Left cardiac atrium (tissue), 4 donors: ENCODE measurements at regions of chr14 and their contacts with region 1.

Region 1: GRCh38 chr14:35404449-35405303 is at the start of gene NFKBIA:
- DNase-seq: peak; percentile 94
- ATAC-seq: peak; percentile 70 to 86
- total RNA-seq, gene NFKBIA: 99.0 to 103 TPM

Region 2: GRCh38 chr14:35046048-35046741 is 358.5 kb before region 1 on chr14 and contains the start of gene FAM177A1:
- intact Hi-C with region 1: loop called in 1 of 2 experiments (anchors 5 kb)
- DNase-seq: peak; percentile 99
- ATAC-seq: peak; percentile 98 to 99
- total RNA-seq, gene FAM177A1: 40.4 to 88.2 TPM

Region 3: GRCh38 chr14:35215110-35215876 is 189.4 kb before region 1 on chr14:
- intact Hi-C with region 1: loop called in 1 of 2 experiments (anchors 2 kb)
- DNase-seq: no peak
- ATAC-seq: peak; percentile 41 to 75

Region 4: DNA sequence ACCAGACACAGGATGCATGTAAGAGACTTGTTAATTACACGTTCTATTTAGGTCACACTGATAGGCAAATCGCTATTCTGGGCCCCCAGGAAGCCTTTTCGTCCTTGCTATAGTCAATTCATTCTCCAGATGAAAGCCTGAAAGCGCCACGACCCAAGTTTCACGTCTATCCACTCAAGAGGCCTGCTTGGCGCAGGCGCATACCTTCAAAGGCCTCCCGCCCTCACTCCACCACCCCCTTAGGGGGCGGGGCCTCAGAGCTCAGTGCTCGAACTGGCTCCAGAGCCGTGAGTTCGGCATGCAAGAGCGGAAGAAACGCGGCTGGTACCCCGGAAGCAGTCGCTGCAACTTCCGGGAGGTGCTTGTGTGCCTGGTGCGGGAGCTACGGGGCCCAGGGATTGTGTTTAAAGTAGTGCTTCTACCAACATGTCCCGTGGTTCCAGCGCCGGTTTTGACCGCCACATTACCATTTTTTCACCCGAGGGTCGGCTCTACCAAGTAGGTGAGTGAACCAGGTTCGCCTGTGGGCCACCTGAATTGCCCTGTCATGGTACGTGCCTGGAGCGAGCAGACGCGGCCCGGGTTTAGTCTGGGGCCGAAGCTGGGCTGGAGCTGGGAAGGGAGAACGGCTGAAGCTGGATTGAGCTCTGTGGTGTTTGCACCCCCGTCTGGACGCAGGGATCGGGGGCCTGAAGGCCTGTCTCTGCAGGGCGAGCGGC is 112.5 kb before region 1 on chr14 and contains the start of gene PSMA6:
- intact Hi-C with region 1: loop called (anchors 1 to 5 kb)
- DNase-seq: peak; percentile 99
- ATAC-seq: peak; percentile 100
- total RNA-seq, gene PSMA6: 131 to 165 TPM

Region 5: GRCh38 chr14:35304812-35305462 is 99.7 kb before region 1 on chr14:
- intact Hi-C with region 1: no loop called
- DNase-seq: no peak
- ATAC-seq: no peak

Region 6: DNA sequence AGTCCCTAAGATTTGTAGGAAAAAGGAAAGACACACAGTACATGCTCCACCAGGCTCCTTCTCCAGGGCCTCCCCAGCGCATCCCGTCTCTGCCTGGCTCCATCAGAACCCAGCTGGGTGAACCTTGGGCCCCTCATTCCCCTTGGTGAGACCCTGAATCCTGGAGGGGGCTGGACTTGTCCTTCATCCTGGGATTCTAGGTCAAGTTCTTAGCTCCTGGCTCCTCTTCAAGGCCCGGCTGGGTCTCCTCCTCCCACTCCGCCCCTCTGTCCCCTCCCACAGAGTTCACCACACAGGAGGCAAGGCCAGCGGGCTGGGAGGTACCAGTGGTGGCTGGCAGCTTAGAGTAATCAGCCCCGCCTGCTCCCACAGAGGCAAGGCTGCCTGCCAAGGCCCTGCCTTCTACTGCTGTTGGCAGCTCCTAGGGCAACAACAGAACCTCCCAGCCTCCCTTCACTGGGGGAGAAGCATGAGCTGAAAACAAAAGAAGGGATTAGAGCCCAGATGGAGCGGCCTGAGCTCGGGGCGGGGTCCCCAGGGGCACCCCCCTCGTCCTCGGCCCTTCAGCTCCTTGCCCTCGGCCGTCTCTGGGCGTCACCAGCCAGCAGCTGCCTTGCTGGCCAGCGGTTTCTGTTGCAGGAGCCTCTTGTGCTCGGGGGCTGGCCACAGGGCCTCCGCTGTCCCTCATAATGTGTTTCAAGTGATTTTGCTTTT is 63.1 kb before region 1 on chr14:
- intact Hi-C with region 1: loop called (anchors 1 to 5 kb)
- DNase-seq: peak; percentile 98
- ATAC-seq: peak; percentile 92 to 93

Region 7: GRCh38 chr14:35386673-35387125 is 18.0 kb before region 1 on chr14:
- intact Hi-C with region 1: loop called in 1 of 2 experiments (anchors 2 kb)
- DNase-seq: no peak
- ATAC-seq: peak; percentile 30 to 35

Region 8: GRCh38 chr14:35519986-35520385 is 115.3 kb after region 1 on chr14:
- intact Hi-C with region 1: no loop called
- DNase-seq: no peak
- ATAC-seq: no peak

Region 9: DNA sequence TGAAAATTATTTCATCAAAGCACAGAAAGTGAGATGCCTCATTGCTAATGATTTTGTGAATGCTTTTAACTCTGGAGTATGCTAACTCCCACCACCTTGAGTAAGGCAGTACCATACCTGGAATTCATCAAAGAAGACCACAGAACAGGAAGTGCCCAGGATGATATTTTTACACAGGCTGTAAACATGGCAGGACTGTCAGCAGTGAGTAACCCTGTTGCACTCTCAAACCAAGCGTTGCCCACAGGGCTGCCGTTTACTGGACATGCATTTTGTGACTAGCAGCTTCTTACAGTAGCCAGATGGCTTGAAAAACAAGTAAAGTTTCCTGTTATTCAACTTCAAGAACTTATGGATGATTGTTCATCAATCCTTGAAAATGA is 362.0 kb after region 1 on chr14:
- intact Hi-C with region 1: no loop called
- DNase-seq: no peak
- ATAC-seq: no peak